ENCODE measurements at regions of chr11 and their contacts with region 1.

Region 1: DNA sequence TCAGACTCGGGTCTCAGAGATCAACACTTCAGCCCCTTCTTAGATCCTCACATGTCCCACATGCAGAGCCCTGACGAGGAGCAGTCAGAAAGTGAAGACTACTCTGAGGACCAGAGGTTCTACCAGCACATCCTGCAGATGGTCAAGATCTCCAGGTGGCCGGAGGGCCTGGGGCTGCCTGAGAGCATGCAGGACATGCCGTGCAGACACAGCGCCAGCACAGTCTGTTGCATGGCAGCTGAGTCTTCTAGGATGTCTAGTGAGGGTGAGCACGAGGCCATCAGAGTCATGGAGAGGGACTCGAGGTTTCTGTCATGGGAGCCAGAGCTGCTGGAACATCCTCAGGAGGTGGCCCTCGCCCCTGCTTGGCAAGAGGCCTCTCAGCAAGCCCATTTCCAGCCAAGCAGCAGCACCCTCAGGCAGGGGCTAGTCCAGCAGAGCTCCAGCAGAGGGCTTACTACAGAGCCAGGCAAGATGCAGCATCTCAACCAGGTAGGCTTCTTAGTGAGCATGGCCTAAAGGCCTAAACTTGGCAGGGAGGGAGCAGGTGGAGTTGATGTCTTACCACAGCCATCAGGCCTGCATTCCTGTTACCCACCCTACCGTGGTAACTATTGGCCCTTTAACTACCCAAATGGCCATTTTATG is 28.6 kb downstream of the CEP164 start:
- DNase-seq: no peak
- ATAC-seq: no peak; the same call in 1 of the 2 replicates
- H3K4me3 ChIP-seq: no peak overlapping the region
- H3K27ac ChIP-seq: no peak overlapping the region
- H3K4me1 ChIP-seq: no peaks in the 10 kb centered on the region
- H3K27me3 ChIP-seq: no peaks in the 10 kb centered on the region
- CTCF ChIP-seq: no peak

Region 2: GRCh38 chr11:117435326-117435725 is 79.1 kb after region 1 on chr11:
- CTCF ChIA-PET with region 1: no interaction called
- POLR2A ChIA-PET with region 1: interaction called, 13 read pairs
- in situ Hi-C with region 1: no loop called
- intact Hi-C with region 1: no loop called
- DNase-seq: no peak
- ATAC-seq: no peak
- H3K4me3 ChIP-seq: no peak overlapping the region
- H3K27ac ChIP-seq: no peak overlapping the region
- H3K4me1 ChIP-seq: no peaks in the 10 kb centered on the region
- H3K27me3 ChIP-seq: peaks cover 5% of the 10 kb centered on the region; the same call in 1 of the 2 replicates
- CTCF ChIP-seq: no peak

Measured in Panc1 (cell line).